H1 (cell line): ENCODE measurements at regions of chr17 and their contacts with region 1.

Region 1: DNA sequence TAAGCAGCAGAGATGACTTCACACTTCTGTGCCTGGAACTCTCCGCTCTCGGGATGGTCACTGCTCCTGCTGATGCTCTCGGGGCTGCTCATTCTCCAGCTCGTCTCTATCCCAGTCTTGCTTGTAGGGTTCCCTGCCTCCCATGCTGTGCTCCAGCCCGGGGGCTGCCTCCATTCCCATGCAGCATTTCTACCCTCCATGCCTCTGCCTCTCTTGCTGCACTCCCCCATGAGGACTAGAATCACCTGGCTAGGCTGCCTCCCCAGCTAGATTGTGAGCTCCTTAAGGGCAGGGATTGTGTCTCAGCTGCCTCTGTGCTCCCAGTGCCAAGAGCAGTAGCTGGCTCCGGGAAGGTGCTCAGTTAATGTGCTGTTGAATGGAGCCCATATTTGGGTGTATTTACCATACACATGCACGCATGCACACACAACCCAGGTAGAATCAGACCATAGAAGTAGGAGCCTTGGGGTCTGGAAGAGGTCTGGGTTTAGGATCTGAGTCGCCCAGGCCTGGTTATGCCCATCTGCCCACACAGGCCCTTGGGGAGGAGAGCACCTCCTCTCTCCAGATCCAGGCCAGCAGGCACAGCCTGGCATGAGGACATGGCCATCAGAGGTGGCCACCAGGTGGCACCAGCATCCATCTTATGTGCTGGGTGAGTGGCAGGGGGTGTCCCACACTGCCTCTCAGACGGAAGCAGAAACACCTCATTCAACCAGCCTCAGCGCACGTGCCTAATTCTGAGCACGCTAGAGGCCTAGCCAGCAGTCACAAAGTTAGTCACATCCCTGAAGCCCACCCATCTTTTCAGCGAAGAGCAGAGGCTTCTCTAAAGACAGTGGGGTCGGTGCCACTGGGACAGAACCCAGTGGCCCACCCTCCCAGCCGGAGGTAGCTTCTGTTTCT is 9.3 kb downstream of the GIT1 start:
- DNase-seq: peak in 1 of 2 experiments; percentile 92
- H3K4me3 ChIP-seq: no peak overlapping the region
- H3K27ac ChIP-seq: no peak overlapping the region
- H3K4me1 ChIP-seq: peaks cover 2 to 11% (median 5%) of the 10 kb centered on the region in 4 experiments; a peak in 6 of 7 replicates
- H3K27me3 ChIP-seq: no peaks in the 10 kb centered on the region
- CTCF ChIP-seq: peak; percentile 90 to 99 (median 98)
- EP300 ChIP-seq: no peak
- POLR2A ChIP-seq: no peak
- RAD21 ChIP-seq: peak; percentile 94 to 95

Region 2: GRCh38 chr17:29524460-29525091 is 55.5 kb before region 1 on chr17:
- CTCF ChIA-PET with region 1: no interaction called
- POLR2A ChIA-PET with region 1: no interaction called
- DNase-seq: no peak
- H3K4me3 ChIP-seq: no peak overlapping the region
- H3K27ac ChIP-seq: no peak overlapping the region
- H3K4me1 ChIP-seq: no peaks in the 10 kb centered on the region
- H3K27me3 ChIP-seq: no peaks in the 10 kb centered on the region
- CTCF ChIP-seq: no peak
- EP300 ChIP-seq: no peak
- POLR2A ChIP-seq: no peak
- RAD21 ChIP-seq: no peak

Region 3: GRCh38 chr17:29549177-29549923 is 30.8 kb before region 1 on chr17:
- CTCF ChIA-PET with region 1: no interaction called
- POLR2A ChIA-PET with region 1: no interaction called
- DNase-seq: no peak
- H3K4me3 ChIP-seq: no peak overlapping the region
- H3K27ac ChIP-seq: no peak overlapping the region
- H3K4me1 ChIP-seq: no peaks in the 10 kb centered on the region
- H3K27me3 ChIP-seq: no peaks in the 10 kb centered on the region
- CTCF ChIP-seq: no peak
- EP300 ChIP-seq: no peak
- POLR2A ChIP-seq: no peak
- RAD21 ChIP-seq: no peak

Region 4: DNA sequence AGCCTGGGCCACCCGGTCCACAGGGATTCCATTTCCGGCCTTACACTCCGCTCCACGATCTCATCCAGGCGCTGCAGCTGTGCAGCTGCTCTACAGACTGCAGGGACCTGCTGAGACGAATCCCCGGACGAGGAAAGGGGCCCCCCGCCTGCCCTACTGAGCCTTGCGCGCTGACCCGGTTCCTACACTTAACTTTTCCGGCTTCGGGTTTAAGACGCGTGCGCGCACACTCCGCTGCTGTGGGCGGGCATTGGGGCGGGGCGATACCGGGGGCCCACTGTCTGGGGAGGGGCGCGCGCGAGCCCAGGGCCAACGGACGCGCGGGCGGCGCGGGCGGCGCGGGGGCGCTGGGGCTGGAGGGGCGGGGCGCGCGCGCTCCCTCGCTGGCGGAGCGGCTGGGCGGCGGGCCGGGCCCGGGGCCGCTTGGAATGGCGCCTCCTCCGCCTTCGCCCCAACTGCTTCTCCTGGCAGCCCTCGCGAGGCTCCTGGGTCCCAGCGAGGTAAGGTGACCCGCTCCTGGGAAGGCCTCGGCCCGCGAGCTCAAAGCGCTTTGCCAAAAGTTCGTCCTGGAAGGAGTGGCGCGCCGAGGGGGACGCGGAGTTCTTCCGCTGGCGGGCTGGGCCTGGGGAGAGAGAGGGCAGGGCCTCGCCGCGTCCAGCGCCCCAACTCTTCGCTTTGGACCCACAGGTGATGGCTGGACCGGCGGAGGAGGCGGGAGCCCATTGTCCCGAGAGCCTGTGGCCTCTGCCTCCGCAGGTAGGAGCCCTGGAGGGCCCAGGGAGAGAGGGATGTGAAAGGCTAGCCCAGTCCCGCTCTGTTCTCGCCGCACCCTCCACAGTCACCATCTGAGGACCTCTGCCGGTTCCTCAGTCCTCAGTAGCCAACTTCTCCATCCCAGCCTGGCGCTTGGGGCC is 11.5 kb before region 1 on chr17 and contains the start of gene TP53I13:
- CTCF ChIA-PET with region 1: interaction called, 85 read pairs
- POLR2A ChIA-PET with region 1: interaction called, 6 read pairs
- DNase-seq: peak in 1 of 2 experiments; percentile 87
- H3K4me3 ChIP-seq: peak within 1 kb of the TSS; percentile 66 to 76 (median 72)
- H3K27ac ChIP-seq: no peak within 1 kb of the TSS
- H3K4me1 ChIP-seq: peaks cover 6 to 15% (median 11%) of the 10 kb centered on the region in 4 experiments; a peak in 6 of 7 replicates
- H3K27me3 ChIP-seq: peaks cover 11 to 48% (median 34%) of the 10 kb centered on the region in 4 experiments
- CTCF ChIP-seq: no peak
- EP300 ChIP-seq: no peak
- POLR2A ChIP-seq: no peak
- RAD21 ChIP-seq: no peak
- total RNA-seq, gene TP53I13: 21.1 and 22.4 TPM in 2 replicates

Region 5: GRCh38 chr17:29597361-29598172 is 17.4 kb after region 1 on chr17:
- CTCF ChIA-PET with region 1: interaction called, 167 read pairs
- POLR2A ChIA-PET with region 1: interaction called, 19 read pairs
- DNase-seq: peak in 1 of 2 experiments; percentile 54
- H3K4me3 ChIP-seq: peak overlapping the region in 2 of 4 experiments; percentile 5 to 20; a peak in 3 of 8 replicates
- H3K27ac ChIP-seq: no peak overlapping the region
- H3K4me1 ChIP-seq: peaks cover 10 to 40% (median 27%) of the 10 kb centered on the region in 4 experiments
- H3K27me3 ChIP-seq: no peaks in the 10 kb centered on the region
- CTCF ChIP-seq: no peak
- EP300 ChIP-seq: no peak
- POLR2A ChIP-seq: no peak
- RAD21 ChIP-seq: no peak

Region 6: GRCh38 chr17:29608891-29609361 is 28.8 kb after region 1 on chr17:
- CTCF ChIA-PET with region 1: interaction called, 193 read pairs
- POLR2A ChIA-PET with region 1: no interaction called
- DNase-seq: no peak
- H3K4me3 ChIP-seq: no peak overlapping the region
- H3K27ac ChIP-seq: no peak overlapping the region
- H3K4me1 ChIP-seq: peaks cover 0 to 4% (median 4%) of the 10 kb centered on the region in 4 experiments; a peak in 6 of 7 replicates
- H3K27me3 ChIP-seq: peaks cover 0 to 5% (median 3%) of the 10 kb centered on the region in 4 experiments; a peak in 3 of 7 replicates
- CTCF ChIP-seq: no peak
- EP300 ChIP-seq: no peak
- POLR2A ChIP-seq: no peak
- RAD21 ChIP-seq: no peak